ENCODE measurements at regions of chr20 and their contacts with region 1.

Region 1: GRCh38 chr20:2651772-2652723 is at the start of gene NOP56:
- DNase-seq: peak; percentile 45
- ATAC-seq: peak; percentile 94
- H3K4me3 ChIP-seq: peak within 1 kb of the TSS; percentile 95
- H3K27ac ChIP-seq: peak within 1 kb of the TSS; percentile 84
- H3K4me1 ChIP-seq: peaks cover 13% of the 10 kb centered on the region
- H3K27me3 ChIP-seq: no peaks in the 10 kb centered on the region
- CTCF ChIP-seq: no peak
- EP300 ChIP-seq: no peak
- POLR2A ChIP-seq: peak; percentile 100
- RAD21 ChIP-seq: no peak
- polyA plus RNA-seq, gene NOP56: 368 to 439 TPM

Region 2: GRCh38 chr20:2470423-2471193 is 181.4 kb before region 1 on chr20 and contains the start of gene SNRPB:
- CTCF ChIA-PET with region 1: interaction called, 5 read pairs
- POLR2A ChIA-PET with region 1: interaction called, 26 read pairs
- RAD21 ChIA-PET with region 1: no interaction called
- SMC1A ChIA-PET with region 1: interaction called, 3 read pairs
- in situ Hi-C with region 1: no loop called
- intact Hi-C with region 1: loop called (anchors 5 kb)
- DNase-seq: peak; percentile 94
- ATAC-seq: peak; percentile 97
- H3K4me3 ChIP-seq: peak within 1 kb of the TSS; percentile 91
- H3K27ac ChIP-seq: peak within 1 kb of the TSS; percentile 94
- H3K4me1 ChIP-seq: no peaks in the 10 kb centered on the region
- H3K27me3 ChIP-seq: no peaks in the 10 kb centered on the region
- CTCF ChIP-seq: no peak
- EP300 ChIP-seq: no peak
- POLR2A ChIP-seq: peak; percentile 95
- RAD21 ChIP-seq: no peak
- polyA plus RNA-seq, gene SNRPB: 15.0 to 108 TPM

Region 3: GRCh38 chr20:2637246-2637645 is 14.8 kb before region 1 on chr20:
- CTCF ChIA-PET with region 1: interaction called, 16 read pairs
- POLR2A ChIA-PET with region 1: interaction called, 3 read pairs
- RAD21 ChIA-PET with region 1: no interaction called
- SMC1A ChIA-PET with region 1: no interaction called
- in situ Hi-C with region 1: no loop called
- intact Hi-C with region 1: no loop called
- DNase-seq: no peak
- ATAC-seq: no peak
- H3K4me3 ChIP-seq: no peak overlapping the region
- H3K27ac ChIP-seq: no peak overlapping the region
- H3K4me1 ChIP-seq: no peaks in the 10 kb centered on the region
- H3K27me3 ChIP-seq: peaks cover 0 to 11% of the 10 kb centered on the region in 2 experiments; a peak in 1 of 4 replicates
- CTCF ChIP-seq: no peak
- EP300 ChIP-seq: no peak
- POLR2A ChIP-seq: no peak
- RAD21 ChIP-seq: no peak

Region 4: DNA sequence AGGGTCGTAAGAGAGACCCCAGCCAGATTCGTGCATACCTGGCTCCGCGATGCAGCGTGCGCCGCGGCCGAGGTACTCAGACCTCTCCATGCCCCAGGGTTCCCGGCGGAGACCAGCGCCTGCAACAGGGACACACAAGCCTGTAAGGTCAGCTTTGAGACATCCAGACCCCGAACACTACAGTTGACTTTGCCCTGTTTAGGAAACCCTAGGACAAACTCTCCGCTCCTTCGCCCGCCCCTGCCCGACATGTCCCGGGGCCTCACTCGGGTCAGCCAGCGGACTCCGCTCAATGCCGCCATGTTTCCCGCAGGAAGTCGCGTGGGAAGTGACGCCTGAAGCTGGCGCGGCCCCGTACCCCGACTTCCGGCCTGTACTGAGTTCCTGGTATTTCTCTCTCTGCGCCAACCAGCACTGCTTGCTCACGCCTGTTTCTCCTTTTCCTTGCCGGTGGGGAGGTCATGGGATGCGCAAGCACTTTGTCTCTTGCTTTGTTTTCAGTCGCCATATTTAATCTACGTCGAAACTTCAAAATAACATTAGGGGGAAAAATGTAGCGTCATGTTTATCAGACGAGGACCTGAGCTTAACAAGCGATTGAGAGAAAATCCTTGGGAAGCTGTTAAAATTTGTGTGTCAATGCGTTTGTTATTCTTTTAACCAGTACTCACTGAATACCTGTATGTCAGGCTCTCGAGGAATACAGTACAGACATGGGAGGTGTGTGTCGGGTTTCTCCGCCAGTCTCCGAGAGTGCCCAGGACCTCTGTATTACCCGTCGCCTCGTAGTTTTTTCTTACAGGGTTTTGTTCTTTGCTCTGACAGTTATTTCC is 12.1 kb after region 1 on chr20 and contains the start of gene IDH3B:
- CTCF ChIA-PET with region 1: interaction called, 9 read pairs
- POLR2A ChIA-PET with region 1: interaction called, 47 read pairs
- RAD21 ChIA-PET with region 1: interaction called, 4 read pairs
- SMC1A ChIA-PET with region 1: interaction called, 25 read pairs
- in situ Hi-C with region 1: no loop called
- intact Hi-C with region 1: no loop called
- DNase-seq: no peak
- ATAC-seq: peak; percentile 95
- H3K4me3 ChIP-seq: peak within 1 kb of the TSS; percentile 100
- H3K27ac ChIP-seq: peak within 1 kb of the TSS; percentile 81
- H3K4me1 ChIP-seq: peaks cover 3% of the 10 kb centered on the region; the same call in 1 of the 2 replicates
- H3K27me3 ChIP-seq: peaks cover 0 to 2% of the 10 kb centered on the region in 2 experiments; a peak in 1 of 4 replicates
- CTCF ChIP-seq: no peak
- EP300 ChIP-seq: no peak
- POLR2A ChIP-seq: peak; percentile 94
- RAD21 ChIP-seq: no peak
- polyA plus RNA-seq, gene IDH3B: 65.3 to 87.1 TPM